ENCODE measurements at regions of chr17 and their contacts with region 1.

Region 1: DNA sequence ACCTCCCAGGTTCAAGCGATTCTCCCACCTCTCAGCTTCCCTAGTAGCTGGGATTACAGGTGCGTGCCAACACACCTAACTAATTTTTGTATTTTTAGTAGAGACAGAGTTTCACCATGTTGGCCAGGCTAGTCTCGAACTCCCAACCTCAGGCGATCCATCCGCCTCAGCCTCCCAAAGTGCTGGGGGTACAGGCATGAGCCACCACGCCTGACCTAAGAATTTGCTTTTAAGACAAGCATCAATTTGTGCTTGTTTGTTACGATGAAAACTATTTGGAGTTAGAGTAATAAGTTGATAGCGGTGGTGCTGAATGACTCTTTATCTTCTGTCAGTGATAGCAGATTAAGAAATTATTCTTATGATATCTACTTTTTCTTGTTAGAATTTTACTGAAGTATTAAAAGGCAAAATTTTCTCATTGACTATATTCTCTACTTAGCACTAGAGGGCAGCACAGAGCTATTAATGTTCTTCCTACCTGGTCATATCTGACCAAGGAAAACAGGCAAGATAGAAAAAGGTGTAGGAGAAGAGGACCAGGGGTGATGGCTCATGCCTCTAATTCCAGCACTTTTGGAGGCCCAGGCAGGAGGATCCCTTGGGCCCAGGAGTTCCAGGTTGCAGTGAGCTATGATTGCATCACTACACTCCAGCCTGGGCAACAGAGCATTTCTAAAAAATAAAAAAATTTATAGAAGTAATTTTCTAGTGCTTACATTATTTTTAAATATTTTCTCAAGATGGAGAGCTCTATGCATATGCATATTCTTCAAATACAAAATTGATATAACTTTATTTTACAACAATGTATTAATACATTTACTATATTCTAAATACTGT is 24.5 kb downstream of the STXBP4 start:
- DNase-seq: peak; percentile 43
- H3K4me3 ChIP-seq: no peak overlapping the region
- H3K27ac ChIP-seq: no peak overlapping the region
- H3K4me1 ChIP-seq: no peaks in the 10 kb centered on the region
- H3K27me3 ChIP-seq: no peaks in the 10 kb centered on the region
- CTCF ChIP-seq: peak; percentile 39 to 40
- POLR2A ChIP-seq: no peak

Region 2: DNA sequence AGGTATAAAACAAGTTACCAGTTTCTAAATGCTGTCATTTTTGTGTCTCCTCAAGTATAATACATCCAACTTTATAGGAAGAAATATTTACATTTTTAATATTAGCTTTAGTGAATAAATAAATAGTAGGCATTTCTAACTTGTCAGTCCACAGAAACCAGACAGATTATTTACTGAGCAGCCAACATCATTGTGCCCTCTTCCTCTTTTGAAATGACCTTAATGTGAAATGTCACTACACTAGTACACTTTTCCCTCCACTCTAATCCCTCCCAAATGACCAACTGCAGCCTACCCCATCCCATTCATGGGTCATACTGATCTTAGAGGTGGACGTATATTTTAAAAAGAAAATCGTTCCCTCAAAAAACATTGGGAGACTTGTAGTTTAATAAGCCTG is 15.3 kb before region 1 on chr17:
- CTCF ChIA-PET with region 1: interaction called, 10 read pairs
- POLR2A ChIA-PET with region 1: no interaction called
- dilution Hi-C with region 1: no loop called
- intact Hi-C with region 1: no loop called
- DNase-seq: no peak
- H3K4me3 ChIP-seq: no peak overlapping the region
- H3K27ac ChIP-seq: no peak overlapping the region
- H3K4me1 ChIP-seq: no peaks in the 10 kb centered on the region
- H3K27me3 ChIP-seq: no peaks in the 10 kb centered on the region
- CTCF ChIP-seq: no peak
- POLR2A ChIP-seq: no peak

Region 3: DNA sequence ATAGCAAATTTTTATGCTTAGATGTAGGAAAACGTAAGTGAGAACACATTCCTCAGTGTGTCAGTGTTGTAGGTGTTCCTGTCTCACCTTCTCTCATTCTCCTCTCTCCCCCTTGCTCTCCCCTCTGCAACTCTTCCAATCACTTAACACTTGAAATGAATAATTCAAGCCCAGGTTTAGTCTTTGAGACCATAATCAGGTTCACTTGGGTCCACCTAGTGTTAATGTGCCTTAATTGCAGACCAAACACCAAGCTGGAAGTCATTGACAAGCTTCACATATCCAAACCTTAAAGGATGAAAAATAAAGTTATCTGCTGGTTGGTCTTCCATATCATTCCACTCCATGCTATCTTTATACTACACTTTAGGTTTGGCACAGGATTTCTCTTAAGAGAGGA is 12.5 kb after region 1 on chr17:
- CTCF ChIA-PET with region 1: interaction called, 99 read pairs
- POLR2A ChIA-PET with region 1: no interaction called
- dilution Hi-C with region 1: no loop called
- intact Hi-C with region 1: no loop called
- DNase-seq: peak; percentile 35
- H3K4me3 ChIP-seq: no peak overlapping the region
- H3K27ac ChIP-seq: no peak overlapping the region
- H3K4me1 ChIP-seq: no peaks in the 10 kb centered on the region
- H3K27me3 ChIP-seq: no peaks in the 10 kb centered on the region
- CTCF ChIP-seq: peak; percentile 22 to 48
- POLR2A ChIP-seq: no peak

Region 4: DNA sequence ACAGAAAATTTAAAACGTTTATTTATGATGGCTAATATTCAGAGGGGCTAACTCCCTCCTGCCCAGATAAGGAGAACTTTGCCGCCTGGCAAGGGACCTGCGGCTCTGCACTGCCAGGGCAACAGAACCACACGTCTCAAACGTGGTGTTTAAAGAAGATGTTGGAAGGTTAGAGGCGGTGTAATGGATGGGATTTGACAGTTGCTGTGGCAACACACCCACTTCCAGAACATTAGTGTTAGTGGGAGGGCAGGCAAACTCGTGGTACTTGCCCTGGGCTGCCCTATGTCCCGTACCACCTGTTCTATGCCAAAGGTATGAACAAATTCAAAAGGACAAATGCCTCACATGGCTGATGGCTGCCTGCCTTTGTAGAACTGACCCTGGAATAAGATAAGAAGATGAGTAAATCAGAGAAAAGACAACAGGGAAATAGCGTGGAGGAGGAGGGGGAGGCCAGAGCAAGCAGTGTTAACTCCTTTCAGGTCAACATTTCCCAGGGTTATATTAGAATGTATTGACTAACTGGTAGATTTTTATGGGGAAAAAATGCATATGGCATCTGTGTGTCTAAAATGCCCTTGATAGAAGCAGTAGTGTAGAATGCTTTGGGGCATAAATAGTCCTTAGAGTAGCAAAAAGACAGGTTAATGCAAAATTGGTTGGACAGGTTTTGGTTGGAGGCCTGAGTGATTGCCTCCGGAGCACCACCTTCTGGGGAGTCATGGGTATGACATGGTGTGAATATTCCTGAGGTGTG is 302.6 kb after region 1 on chr17:
- CTCF ChIA-PET with region 1: interaction called, 84 read pairs
- POLR2A ChIA-PET with region 1: no interaction called
- dilution Hi-C with region 1: no loop called
- intact Hi-C with region 1: loop called (anchors 1 kb)
- DNase-seq: peak; percentile 65
- H3K4me3 ChIP-seq: no peak overlapping the region
- H3K27ac ChIP-seq: no peak overlapping the region
- H3K4me1 ChIP-seq: no peaks in the 10 kb centered on the region
- H3K27me3 ChIP-seq: no peaks in the 10 kb centered on the region
- CTCF ChIP-seq: peak; percentile 68 to 82
- POLR2A ChIP-seq: no peak

Region 5: GRCh38 chr17:55348749-55349354 is 355.8 kb after region 1 on chr17:
- CTCF ChIA-PET with region 1: interaction called, 136 read pairs
- POLR2A ChIA-PET with region 1: no interaction called
- dilution Hi-C with region 1: no loop called
- intact Hi-C with region 1: loop called (anchors 1 kb)
- DNase-seq: peak; percentile 56
- H3K4me3 ChIP-seq: no peak overlapping the region
- H3K27ac ChIP-seq: no peak overlapping the region
- H3K4me1 ChIP-seq: no peaks in the 10 kb centered on the region
- H3K27me3 ChIP-seq: peaks cover 6 to 7% of the 10 kb centered on the region in 2 experiments
- CTCF ChIP-seq: peak; percentile 62 to 84
- POLR2A ChIP-seq: no peak

Region 6: DNA sequence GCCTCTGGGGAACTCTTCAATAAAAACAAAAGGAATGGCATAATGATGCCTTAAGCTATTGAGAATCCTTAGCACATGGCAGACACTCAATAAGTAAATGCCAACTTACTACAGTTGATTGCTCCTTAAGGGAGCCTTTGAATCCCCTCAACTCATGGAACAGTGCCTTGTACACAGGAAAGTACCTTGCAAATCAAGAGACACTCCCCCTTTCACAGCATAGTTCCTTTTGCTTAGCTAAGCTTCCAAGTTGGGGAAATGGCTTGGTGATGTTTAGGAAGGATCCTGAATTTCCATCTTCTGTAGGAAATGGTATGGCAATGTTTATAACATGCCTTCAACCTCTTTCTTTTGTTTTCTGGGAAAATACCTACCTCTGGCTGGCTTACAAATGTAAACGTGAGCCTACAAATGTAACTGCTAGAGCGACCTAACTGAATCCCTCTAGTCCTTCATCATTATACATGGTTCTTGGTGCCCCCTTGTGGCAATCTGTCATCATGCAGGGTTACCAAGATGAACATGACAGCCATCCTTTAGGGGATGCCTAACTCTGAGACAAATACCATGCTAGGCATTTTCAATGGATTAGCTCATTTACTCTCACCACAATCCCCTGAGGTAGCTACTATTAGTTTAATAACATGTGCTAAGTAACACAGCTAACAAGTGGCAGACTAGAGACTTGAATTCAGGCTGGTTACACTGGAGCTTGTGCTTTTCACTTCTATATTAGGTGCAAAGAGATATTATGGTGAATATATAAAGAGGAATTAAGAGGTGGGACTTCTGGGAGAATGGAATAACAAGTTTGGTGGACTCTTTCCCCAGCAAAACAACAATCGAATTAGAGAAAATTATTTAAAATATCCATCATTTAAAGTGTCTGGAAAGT is 363.7 kb after region 1 on chr17:
- CTCF ChIA-PET with region 1: interaction called, 136 read pairs
- POLR2A ChIA-PET with region 1: no interaction called
- dilution Hi-C with region 1: no loop called
- intact Hi-C with region 1: no loop called
- DNase-seq: peak; percentile 65
- H3K4me3 ChIP-seq: no peak overlapping the region
- H3K27ac ChIP-seq: no peak overlapping the region
- H3K4me1 ChIP-seq: no peaks in the 10 kb centered on the region
- H3K27me3 ChIP-seq: peaks cover 0 to 14% of the 10 kb centered on the region in 2 experiments
- CTCF ChIP-seq: peak; percentile 69 to 70
- POLR2A ChIP-seq: no peak